ENCODE measurements at regions of chr6 and their contacts with region 1.

Region 1: DNA sequence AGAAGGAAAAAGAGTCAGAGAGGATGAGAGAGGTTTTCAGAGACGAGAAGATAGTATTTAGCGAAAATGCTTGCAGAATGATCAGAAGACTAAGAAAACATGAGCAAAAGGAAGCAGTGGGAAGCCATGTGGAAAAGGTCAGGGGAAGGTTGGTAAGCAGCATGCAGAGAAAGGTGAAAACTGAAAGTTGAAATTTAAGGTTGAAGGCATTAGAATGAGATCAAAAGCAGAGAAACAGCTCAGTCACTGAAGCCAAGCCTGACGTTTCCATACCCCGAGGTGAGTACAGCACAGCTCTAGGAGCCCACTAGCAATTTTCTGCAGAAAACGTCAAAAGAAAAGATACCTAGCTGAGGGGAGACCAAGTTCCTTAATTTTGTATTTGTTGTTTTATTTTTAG is 19.1 kb upstream of the TFB1M start:
- DNase-seq: no peak
- ATAC-seq: no peak
- H3K4me3 ChIP-seq: no peak overlapping the region
- H3K27ac ChIP-seq: no peak overlapping the region
- H3K4me1 ChIP-seq: peaks cover 0 to 11% (median 7%) of the 10 kb centered on the region in 3 donors
- H3K27me3 ChIP-seq: no peaks in the 10 kb centered on the region
- CTCF ChIP-seq: no peak

Region 2: GRCh38 chr6:155212616-155213365 is 120.6 kb before region 1 on chr6:
- intact Hi-C with region 1: no loop called
- DNase-seq: no peak
- ATAC-seq: no peak
- H3K4me3 ChIP-seq: no peak overlapping the region
- H3K27ac ChIP-seq: no peak overlapping the region
- H3K4me1 ChIP-seq: no peaks in the 10 kb centered on the region
- H3K27me3 ChIP-seq: no peaks in the 10 kb centered on the region
- CTCF ChIP-seq: no peak

Region 3: DNA sequence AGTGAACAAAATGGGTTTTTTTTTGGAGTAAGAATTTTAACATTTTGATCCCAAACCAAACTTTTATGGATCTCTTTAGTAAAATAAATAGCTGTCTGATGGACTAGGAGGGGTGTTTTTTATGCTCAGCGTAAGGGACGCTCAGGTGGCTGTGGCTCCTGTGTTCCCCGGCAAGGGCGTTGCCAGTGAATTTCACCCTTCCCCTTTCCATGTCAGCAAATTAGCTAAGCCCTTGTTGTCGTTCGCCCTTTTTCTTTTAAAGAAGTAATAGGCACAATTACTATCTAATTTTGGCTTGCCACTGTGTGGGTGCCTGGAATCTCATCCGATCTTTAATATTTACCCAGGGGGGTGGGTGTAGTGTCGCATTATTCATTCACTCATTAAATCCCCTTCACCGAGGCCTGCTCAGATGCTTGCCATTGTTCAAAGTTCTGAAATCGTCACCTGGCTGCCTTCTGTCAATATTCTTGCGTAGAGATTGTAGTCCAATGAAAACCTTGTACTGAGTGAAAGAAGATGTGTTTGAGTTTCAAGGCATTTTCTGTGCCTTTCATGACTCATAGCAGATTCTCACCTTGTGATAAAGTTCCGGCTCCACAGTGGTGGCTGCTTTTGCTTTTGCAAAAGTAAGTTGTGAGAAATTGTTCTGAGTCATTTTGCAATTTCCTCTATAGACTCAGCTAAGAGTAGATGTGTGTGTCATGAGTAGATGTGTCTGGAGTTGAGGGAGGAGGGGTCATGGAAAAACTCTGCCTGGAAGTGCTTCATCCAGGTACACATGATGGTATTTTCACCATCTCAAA is 109.6 kb before region 1 on chr6:
- intact Hi-C with region 1: no loop called
- DNase-seq: no peak
- ATAC-seq: peak in 1 of 4 donors; percentile 27
- H3K4me3 ChIP-seq: no peak overlapping the region
- H3K27ac ChIP-seq: no peak overlapping the region
- H3K4me1 ChIP-seq: no peaks in the 10 kb centered on the region
- H3K27me3 ChIP-seq: no peaks in the 10 kb centered on the region
- CTCF ChIP-seq: no peak

Region 4: DNA sequence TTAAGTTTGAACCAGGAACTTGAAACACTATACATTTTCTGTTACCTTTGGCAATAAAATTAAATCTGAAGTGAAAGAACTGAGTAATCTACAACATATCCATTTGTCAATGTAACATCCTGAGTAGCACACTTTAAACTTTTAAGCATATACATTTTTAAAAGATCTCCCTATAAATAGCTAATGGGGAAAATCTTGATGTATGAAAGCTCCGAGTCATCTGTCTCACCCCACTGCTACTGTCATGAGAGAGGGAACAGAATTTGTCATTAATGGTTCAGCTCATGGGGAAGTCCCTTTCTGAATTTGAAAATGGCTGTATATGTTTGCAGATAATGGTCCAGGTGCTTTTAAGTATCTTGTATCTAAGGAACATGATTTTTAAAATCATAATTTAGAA is 177.5 kb after region 1 on chr6:
- intact Hi-C with region 1: loop called in 1 of 3 experiments (anchors 10 kb)
- DNase-seq: no peak
- ATAC-seq: no peak
- H3K4me3 ChIP-seq: no peak overlapping the region
- H3K27ac ChIP-seq: no peak overlapping the region
- H3K4me1 ChIP-seq: no peaks in the 10 kb centered on the region
- H3K27me3 ChIP-seq: no peaks in the 10 kb centered on the region
- CTCF ChIP-seq: no peak

Region 5: DNA sequence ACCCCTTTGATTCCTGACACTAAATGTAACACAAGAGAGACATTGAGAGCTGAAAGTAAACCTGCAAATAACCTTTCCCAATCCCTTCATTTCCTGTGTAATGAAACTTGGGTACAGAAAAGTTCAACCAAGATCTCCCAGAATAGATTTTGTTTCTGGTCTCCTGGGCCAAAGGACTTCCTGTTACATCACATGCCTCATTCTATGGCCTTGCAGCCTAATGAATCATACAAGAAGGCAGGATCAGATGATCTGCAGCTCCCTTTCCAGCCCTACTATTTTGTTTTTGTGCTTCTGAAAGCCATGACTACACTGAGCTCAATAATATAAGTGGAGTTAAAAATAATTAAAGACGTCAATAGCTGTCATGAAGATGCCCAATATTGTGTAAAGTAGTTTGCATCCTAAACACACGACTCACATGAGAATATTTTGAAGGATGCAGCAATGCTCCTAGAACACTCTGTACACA is 195.6 kb after region 1 on chr6:
- intact Hi-C with region 1: loop called in 1 of 3 experiments (anchors 10 kb)
- DNase-seq: no peak
- ATAC-seq: peak in 3 of 4 donors; percentile 60 to 88 (median 77)
- H3K4me3 ChIP-seq: no peak overlapping the region
- H3K27ac ChIP-seq: peak overlapping the region in 2 of 4 donors; percentile 38 to 47
- H3K4me1 ChIP-seq: peaks cover 0 to 12% (median 6%) of the 10 kb centered on the region in 3 donors
- H3K27me3 ChIP-seq: no peaks in the 10 kb centered on the region
- CTCF ChIP-seq: no peak

Measured in pancreas (tissue), 10 donors.